Heart left ventricle (tissue), 16 donors: ENCODE measurements at regions of chr1 and their contacts with region 1.

Region 1: GRCh38 chr1:162023547-162024501 is at the start of gene OLFML2B:
- DNase-seq: peak; percentile 71 to 90 (median 78)
- ATAC-seq: peak; percentile 76 to 92 (median 88)
- H3K4me3 ChIP-seq: peak within 1 kb of the TSS; percentile 37 to 76 (median 58)
- H3K27ac ChIP-seq: peak within 1 kb of the TSS in 6 of 12 donors; percentile 42 to 83 (median 55)
- H3K4me1 ChIP-seq: peaks cover 0 to 52% (median 29%) of the 10 kb centered on the region in 12 donors
- H3K27me3 ChIP-seq: peaks cover 0 to 15% (median 0%) of the 10 kb centered on the region in 9 donors
- CTCF ChIP-seq: peak in 5 of 12 donors; percentile 8 to 40 (median 31)
- POLR2A ChIP-seq: no peak
- total RNA-seq, gene OLFML2B: 0.75 to 39.2 (median 2.9) TPM

Region 2: DNA sequence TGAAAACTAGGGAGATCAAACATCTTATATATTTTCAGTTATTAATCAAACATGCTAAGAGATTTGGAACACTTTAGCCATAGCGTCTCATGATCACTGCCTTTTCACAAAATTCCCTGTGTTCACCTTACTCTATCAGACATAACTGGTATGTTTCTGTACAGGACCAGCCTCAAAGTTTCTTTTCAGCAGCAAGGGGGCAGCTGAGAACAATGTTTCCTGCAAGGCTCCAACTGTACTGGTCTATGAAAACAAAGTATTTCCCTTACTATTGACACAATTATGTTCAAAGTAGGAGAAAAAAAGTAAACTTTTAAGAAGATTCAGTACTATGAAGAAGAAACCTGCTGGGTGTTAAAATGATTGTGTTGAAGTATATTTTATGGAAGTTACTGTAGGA is 159.2 kb before region 1 on chr1:
- intact Hi-C with region 1: loop called in 1 of 10 experiments (anchors 10 kb)
- DNase-seq: no peak
- ATAC-seq: peak in 1 of 4 donors; percentile 34
- H3K4me3 ChIP-seq: no peak overlapping the region
- H3K27ac ChIP-seq: no peak overlapping the region
- H3K4me1 ChIP-seq: peaks cover 0 to 2% (median 0%) of the 10 kb centered on the region in 12 donors
- H3K27me3 ChIP-seq: no peaks in the 10 kb centered on the region
- CTCF ChIP-seq: peak in 9 of 12 donors; percentile 12 to 58 (median 42)
- POLR2A ChIP-seq: no peak

Region 3: DNA sequence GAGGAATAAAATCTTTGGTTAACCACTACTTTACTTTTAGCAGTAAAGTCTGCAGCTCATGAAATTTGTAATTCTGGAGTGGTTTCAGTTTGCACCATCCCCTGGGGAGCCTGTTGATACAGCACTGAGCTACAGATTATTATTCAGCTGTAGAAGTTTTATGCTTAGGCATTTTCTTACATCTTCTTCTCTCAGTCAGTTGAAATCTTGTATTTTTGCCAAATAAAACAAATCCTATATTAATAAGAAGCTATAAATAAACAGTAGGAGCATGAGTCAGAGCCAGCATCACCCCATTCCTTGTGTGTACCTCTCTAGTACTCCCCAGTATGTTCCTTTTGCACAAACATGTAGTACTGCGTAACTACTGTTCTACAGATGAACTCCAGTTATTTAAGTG is 138.8 kb before region 1 on chr1:
- intact Hi-C with region 1: loop called in 2 of 10 experiments (anchors 5 to 10 kb)
- DNase-seq: peak in 4 of 5 donors; percentile 23 to 40 (median 30)
- ATAC-seq: peak in 2 of 4 donors; percentile 44 to 65
- H3K4me3 ChIP-seq: peak overlapping the region in 6 of 12 donors; percentile 0 to 34 (median 10)
- H3K27ac ChIP-seq: peak overlapping the region in 4 of 12 donors; percentile 4 to 30 (median 28)
- H3K4me1 ChIP-seq: peaks cover 0 to 9% (median 0%) of the 10 kb centered on the region in 12 donors
- H3K27me3 ChIP-seq: no peaks in the 10 kb centered on the region
- CTCF ChIP-seq: no peak
- POLR2A ChIP-seq: no peak

Region 4: GRCh38 chr1:161973924-161974845 is 49.6 kb before region 1 on chr1:
- intact Hi-C with region 1: loop called in 1 of 10 experiments (anchors 5 kb)
- DNase-seq: peak in 4 of 5 donors; percentile 36 to 79 (median 68)
- ATAC-seq: peak; percentile 76 to 93 (median 86)
- H3K4me3 ChIP-seq: no peak overlapping the region
- H3K27ac ChIP-seq: peak overlapping the region in 8 of 12 donors; percentile 7 to 60 (median 36)
- H3K4me1 ChIP-seq: peaks cover 0 to 18% (median 11%) of the 10 kb centered on the region in 12 donors
- H3K27me3 ChIP-seq: no peaks in the 10 kb centered on the region
- CTCF ChIP-seq: no peak
- POLR2A ChIP-seq: no peak

Region 5: GRCh38 chr1:161994175-161994668 is 29.6 kb before region 1 on chr1:
- intact Hi-C with region 1: loop called in 1 of 10 experiments (anchors 1 kb)
- DNase-seq: peak in 2 of 5 donors; percentile 40 to 63
- ATAC-seq: peak in 3 of 4 donors; percentile 67 to 77 (median 72)
- H3K4me3 ChIP-seq: no peak overlapping the region
- H3K27ac ChIP-seq: peak overlapping the region in 1 of 12 donors; percentile 18
- H3K4me1 ChIP-seq: peaks cover 0 to 19% (median 0%) of the 10 kb centered on the region in 12 donors
- H3K27me3 ChIP-seq: no peaks in the 10 kb centered on the region
- CTCF ChIP-seq: no peak
- POLR2A ChIP-seq: no peak